HEK293 (cell line): ENCODE measurements at regions of chr15 and their contacts with region 1.

Region 1: DNA sequence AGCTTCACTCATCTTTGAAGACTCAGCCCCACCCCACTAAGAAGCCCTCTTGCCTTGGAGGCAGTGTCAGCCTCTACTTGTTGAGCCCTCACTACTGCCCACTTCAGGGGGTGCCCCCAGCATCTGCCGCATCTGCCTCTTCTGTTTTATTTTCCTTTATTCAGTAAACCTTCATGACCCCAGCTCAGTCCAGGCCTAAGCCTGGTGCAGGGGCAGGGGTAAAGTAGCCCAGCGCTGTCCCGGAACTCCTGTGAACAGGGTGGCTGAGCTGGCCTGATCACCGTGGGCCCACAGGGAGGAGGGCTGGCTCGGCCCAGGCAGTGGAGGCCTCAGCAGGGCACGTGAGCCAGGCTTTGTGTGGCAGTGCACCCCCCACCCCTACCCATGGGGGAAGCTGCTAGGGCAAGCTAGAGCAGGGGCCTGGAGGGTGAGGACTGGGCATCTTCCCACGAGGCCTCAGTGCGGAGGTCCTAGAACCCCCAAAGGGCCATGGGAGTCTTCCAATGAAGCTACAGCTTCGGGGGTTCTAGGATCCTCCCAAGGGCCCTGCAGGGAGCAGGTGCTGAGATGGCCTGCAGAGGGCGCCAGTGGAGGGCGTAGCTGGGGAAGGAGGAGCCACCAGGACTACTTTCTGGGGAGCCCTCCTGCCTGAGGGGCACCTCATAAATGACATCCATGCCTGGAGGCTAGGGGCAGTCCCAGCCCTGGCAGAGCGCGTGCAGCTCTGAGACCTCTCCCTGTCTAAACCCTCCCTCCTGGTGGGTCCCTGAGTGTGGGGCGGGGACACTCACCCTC is 36.0 kb downstream of the TSPAN3 start:
- H3K4me3 ChIP-seq: no peak overlapping the region
- H3K27ac ChIP-seq: no peak overlapping the region
- H3K4me1 ChIP-seq: no peaks in the 10 kb centered on the region
- CTCF ChIP-seq: peak; percentile 72

Region 2: GRCh38 chr15:76931397-76932007 is 103.4 kb before region 1 on chr15 and contains the start of gene RCN2:
- CTCF ChIA-PET with region 1: no interaction called
- POLR2A ChIA-PET with region 1: no interaction called
- H3K4me3 ChIP-seq: peak within 1 kb of the TSS; percentile 90
- H3K27ac ChIP-seq: peak within 1 kb of the TSS; percentile 86
- H3K4me1 ChIP-seq: peaks cover 6% of the 10 kb centered on the region; the same call in 1 of the 2 replicates
- CTCF ChIP-seq: no peak

Region 3: GRCh38 chr15:77024271-77025082 is 10.4 kb before region 1 on chr15:
- CTCF ChIA-PET with region 1: interaction called, 32 read pairs
- POLR2A ChIA-PET with region 1: interaction called, 5 read pairs
- H3K4me3 ChIP-seq: no peak overlapping the region
- H3K27ac ChIP-seq: no peak overlapping the region
- H3K4me1 ChIP-seq: no peaks in the 10 kb centered on the region
- CTCF ChIP-seq: peak; percentile 63

Region 4: GRCh38 chr15:77052556-77052955 is 17.7 kb after region 1 on chr15:
- CTCF ChIA-PET with region 1: interaction called, 35 read pairs
- POLR2A ChIA-PET with region 1: no interaction called
- H3K4me3 ChIP-seq: no peak overlapping the region
- H3K27ac ChIP-seq: no peak overlapping the region
- H3K4me1 ChIP-seq: no peaks in the 10 kb centered on the region; the same call in none of the 2 replicates
- CTCF ChIP-seq: no peak

Region 5: DNA sequence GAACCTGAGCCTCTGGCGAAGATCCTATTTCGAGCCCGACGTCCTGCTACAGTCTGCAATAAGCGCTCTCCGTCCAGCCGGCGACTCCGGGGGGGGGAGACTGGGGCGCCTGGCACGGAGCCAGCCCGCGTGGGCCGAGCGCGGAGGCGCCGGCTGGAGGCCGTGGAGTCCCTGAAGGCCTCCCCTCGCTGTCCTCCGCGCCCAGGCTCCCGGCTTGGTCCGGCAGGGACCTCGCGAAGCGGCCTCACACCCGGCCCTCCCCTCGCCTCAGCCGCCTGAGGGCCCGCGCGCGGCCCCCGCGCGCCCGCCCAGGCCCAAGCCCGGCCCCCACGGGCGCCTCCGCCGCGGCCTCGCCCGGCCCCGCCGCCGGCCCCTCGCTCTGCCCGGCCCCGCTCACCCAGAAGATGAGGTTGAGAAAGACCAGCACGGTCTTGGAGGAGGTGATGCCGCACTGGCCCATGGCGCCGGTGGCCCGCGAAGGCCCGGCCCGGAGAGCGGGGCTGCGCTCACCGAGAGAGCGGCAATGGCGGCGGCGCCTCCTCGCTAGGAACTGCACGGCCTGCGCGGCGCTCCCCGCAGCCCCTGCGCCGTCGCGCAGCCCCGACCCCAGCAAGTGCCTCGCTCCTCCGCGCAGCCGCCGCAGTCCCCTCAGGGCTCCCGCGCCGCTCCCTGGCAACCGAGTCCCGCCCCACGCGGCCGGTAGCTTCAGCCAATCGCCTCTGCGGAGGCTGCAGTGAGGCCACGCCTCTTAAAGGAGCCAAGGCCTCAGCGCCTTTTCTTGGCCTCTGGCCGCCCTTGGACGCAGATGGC is 35.8 kb after region 1 on chr15 and contains the start of gene TSPAN3:
- CTCF ChIA-PET with region 1: interaction called, 10 read pairs
- POLR2A ChIA-PET with region 1: no interaction called
- H3K4me3 ChIP-seq: peak within 1 kb of the TSS; percentile 92
- H3K27ac ChIP-seq: peak within 1 kb of the TSS; percentile 97
- H3K4me1 ChIP-seq: peaks cover 25% of the 10 kb centered on the region
- CTCF ChIP-seq: no peak